CD8-positive, alpha-beta T cell (primary cell): ENCODE measurements at regions of chr3 and their contacts with region 1.

Region 1: GRCh38 chr3:107660306-107660976 is 137.7 kb downstream of the BBX start:
- DNase-seq: peak in 2 of 9 experiments; percentile 52 to 61
- ATAC-seq: no peak
- H3K4me3 ChIP-seq: no peak overlapping the region
- H3K4me3 Mint-ChIP-seq: no peak overlapping the region
- H3K27ac ChIP-seq: no peak overlapping the region
- H3K27ac Mint-ChIP-seq: no peak overlapping the region
- H3K4me1 ChIP-seq: peaks cover 17% of the 10 kb centered on the region
- H3K4me1 Mint-ChIP-seq: peaks cover 31% of the 10 kb centered on the region
- H3K27me3 ChIP-seq: no peaks in the 10 kb centered on the region
- H3K27me3 Mint-ChIP-seq: no peaks in the 10 kb centered on the region
- CTCF ChIP-seq: peak; percentile 73

Region 2: DNA sequence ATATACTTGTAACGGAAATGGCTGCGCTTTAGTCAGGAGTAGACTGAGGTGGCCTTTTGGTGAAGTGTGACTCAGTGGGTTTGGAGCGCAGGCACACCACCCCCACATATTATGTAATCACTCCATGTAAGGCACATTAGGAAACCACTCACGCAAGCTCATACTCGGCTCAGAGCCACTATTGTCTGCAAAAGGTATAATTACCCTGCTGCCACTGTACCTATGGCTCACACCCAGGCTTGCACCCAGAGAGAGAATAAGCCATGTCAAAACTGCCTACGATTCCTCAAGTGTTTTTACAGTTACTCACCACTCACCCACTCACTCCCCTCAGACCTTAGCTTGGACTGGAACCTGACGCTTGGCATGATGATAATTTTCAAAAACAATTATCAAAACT is 895.1 kb before region 1 on chr3:
- CTCF ChIA-PET with region 1: no interaction called
- POLR2A ChIA-PET with region 1: no interaction called
- intact Hi-C with region 1: no loop called
- DNase-seq: no peak
- ATAC-seq: no peak
- H3K4me3 ChIP-seq: no peak overlapping the region
- H3K4me3 Mint-ChIP-seq: no peak overlapping the region
- H3K27ac ChIP-seq: no peak overlapping the region
- H3K27ac Mint-ChIP-seq: no peak overlapping the region
- H3K4me1 ChIP-seq: no peaks in the 10 kb centered on the region
- H3K4me1 Mint-ChIP-seq: no peaks in the 10 kb centered on the region
- H3K27me3 ChIP-seq: no peaks in the 10 kb centered on the region
- H3K27me3 Mint-ChIP-seq: no peaks in the 10 kb centered on the region
- CTCF ChIP-seq: no peak

Region 3: GRCh38 chr3:107598926-107599771 is 61.3 kb before region 1 on chr3:
- CTCF ChIA-PET with region 1: no interaction called
- POLR2A ChIA-PET with region 1: no interaction called
- intact Hi-C with region 1: no loop called
- DNase-seq: peak; percentile 2 to 69 (median 44)
- ATAC-seq: peak; percentile 89
- H3K4me3 ChIP-seq: peak overlapping the region; percentile 40
- H3K4me3 Mint-ChIP-seq: peak overlapping the region; percentile 87
- H3K27ac ChIP-seq: peak overlapping the region; percentile 32 to 81
- H3K27ac Mint-ChIP-seq: peak overlapping the region; percentile 94
- H3K4me1 ChIP-seq: peaks cover 31% of the 10 kb centered on the region
- H3K4me1 Mint-ChIP-seq: peaks cover 69% of the 10 kb centered on the region
- H3K27me3 ChIP-seq: no peaks in the 10 kb centered on the region
- H3K27me3 Mint-ChIP-seq: no peaks in the 10 kb centered on the region
- CTCF ChIP-seq: no peak

Region 4: GRCh38 chr3:107846279-107846852 is 185.9 kb after region 1 on chr3:
- CTCF ChIA-PET with region 1: interaction called, 5 read pairs
- POLR2A ChIA-PET with region 1: no interaction called
- intact Hi-C with region 1: loop called in 1 of 2 experiments (anchors 5 kb)
- DNase-seq: peak in 4 of 9 experiments; percentile 18 to 48 (median 38)
- ATAC-seq: no peak
- H3K4me3 ChIP-seq: no peak overlapping the region
- H3K4me3 Mint-ChIP-seq: no peak overlapping the region
- H3K27ac ChIP-seq: no peak overlapping the region
- H3K27ac Mint-ChIP-seq: no peak overlapping the region
- H3K4me1 ChIP-seq: no peaks in the 10 kb centered on the region
- H3K4me1 Mint-ChIP-seq: no peaks in the 10 kb centered on the region
- H3K27me3 ChIP-seq: no peaks in the 10 kb centered on the region
- H3K27me3 Mint-ChIP-seq: peaks cover 6% of the 10 kb centered on the region
- CTCF ChIP-seq: no peak

Region 5: DNA sequence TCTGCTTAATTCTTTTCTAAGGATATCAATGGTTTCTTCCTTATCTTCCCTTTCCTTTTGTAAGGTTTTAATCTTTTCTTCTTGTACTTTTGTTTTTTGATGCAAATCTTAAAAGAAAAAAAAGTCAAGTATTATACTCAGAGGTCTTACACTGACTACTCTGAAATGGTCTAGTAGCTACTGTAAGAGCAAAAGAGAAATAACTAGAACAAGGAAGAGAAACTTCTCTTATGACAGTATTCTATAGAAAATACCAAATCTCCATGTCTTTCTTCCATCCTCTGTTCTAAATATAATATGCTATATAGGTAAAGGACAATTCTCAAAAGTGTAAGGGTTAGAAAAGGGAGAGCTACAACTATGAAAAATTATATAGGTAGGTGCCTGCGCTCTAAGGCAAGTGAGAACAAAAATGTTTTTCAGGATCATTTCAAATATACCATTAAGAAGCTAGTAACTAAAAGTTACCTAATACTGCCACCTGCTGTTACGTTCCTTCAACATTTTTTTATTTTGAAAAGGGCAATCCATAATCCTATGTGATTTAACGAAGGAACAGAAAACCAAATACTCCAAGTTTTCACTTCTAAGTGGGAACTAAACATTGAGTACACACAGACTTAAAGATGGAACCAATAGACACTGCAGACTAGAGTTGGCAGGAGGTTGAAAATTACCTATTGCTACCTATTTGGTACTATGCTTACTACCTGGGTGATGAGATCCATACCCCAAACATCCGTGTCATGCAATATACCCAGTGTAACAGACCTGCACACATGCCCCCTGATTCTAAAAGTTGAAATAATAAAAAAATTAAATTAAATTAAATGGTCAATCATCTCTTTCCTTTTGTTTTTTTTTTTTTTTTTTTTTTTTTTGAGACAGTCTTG is 892.1 kb after region 1 on chr3:
- CTCF ChIA-PET with region 1: no interaction called
- POLR2A ChIA-PET with region 1: no interaction called
- intact Hi-C with region 1: loop called in 1 of 2 experiments (anchors 5 kb)
- DNase-seq: peak in 2 of 9 experiments; percentile 59 to 65
- ATAC-seq: peak; percentile 52
- H3K4me3 ChIP-seq: no peak overlapping the region
- H3K4me3 Mint-ChIP-seq: no peak overlapping the region
- H3K27ac ChIP-seq: no peak overlapping the region
- H3K27ac Mint-ChIP-seq: no peak overlapping the region
- H3K4me1 ChIP-seq: no peaks in the 10 kb centered on the region
- H3K4me1 Mint-ChIP-seq: peaks cover 2% of the 10 kb centered on the region
- H3K27me3 ChIP-seq: no peaks in the 10 kb centered on the region
- H3K27me3 Mint-ChIP-seq: no peaks in the 10 kb centered on the region
- CTCF ChIP-seq: peak; percentile 58